ENCODE measurements at regions of chr14 and their contacts with region 1.

Region 1: DNA sequence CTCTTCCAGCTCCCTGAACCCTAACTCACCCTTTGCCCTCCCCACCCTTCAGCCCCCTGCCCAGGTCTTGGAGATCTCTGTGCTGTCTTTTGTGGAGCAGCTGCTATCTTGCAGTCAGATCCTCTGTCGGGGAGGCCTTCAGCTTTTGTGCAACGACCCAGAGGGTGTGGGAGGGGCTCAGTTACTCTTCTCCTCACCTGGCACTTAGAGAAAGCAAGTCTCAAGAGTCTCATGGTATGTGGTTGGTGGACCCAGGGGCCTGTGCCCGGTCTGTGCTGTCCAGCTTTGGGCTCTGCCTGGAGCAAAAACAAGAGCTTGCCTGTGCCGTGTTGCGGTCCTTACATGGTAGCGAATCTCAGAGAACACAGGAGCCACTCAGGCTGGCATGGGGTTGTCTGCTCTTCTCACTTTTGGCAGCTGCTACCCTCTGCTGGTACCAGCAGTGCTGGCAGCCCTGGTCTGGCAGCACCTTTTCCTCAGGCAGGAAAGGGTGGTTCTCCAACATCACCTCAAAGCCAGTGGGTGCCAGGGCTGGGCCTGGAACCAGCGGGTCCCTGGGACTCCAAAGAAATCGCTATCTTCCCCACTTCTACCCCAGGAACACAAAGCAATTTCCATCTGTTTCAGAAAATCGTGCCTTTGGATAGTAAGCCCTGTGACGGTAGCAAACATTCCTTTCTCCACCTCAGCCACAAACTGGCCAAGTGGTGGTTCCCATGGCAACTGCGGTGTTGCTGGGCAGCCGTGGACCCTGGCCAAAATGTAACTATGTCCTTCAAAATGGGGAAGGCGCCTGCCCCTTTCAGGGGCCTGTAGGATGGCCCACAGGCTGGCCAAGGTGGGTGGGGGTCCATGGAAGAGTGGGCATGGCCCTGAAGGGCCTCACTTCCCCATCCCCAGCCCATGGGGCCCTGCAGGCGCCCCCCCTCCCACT is 90.0 kb downstream of the RIN3 start:
- DNase-seq: peak in 8 of 9 donors; percentile 33 to 85 (median 78)
- ATAC-seq: peak; percentile 95
- H3K4me3 ChIP-seq: no peak overlapping the region
- H3K4me3 Mint-ChIP-seq: peak overlapping the region in 9 of 10 donors; percentile 64 to 85 (median 78)
- H3K27ac ChIP-seq: no peak overlapping the region
- H3K27ac Mint-ChIP-seq: peak overlapping the region in 7 of 9 donors; percentile 48 to 95 (median 81)
- H3K4me1 ChIP-seq: peaks cover 0 to 12% of the 10 kb centered on the region in 2 donors
- H3K4me1 Mint-ChIP-seq: peaks cover 12 to 48% (median 37%) of the 10 kb centered on the region in 7 donors
- H3K27me3 ChIP-seq: no peaks in the 10 kb centered on the region
- H3K27me3 Mint-ChIP-seq: peaks cover 0 to 16% (median 0%) of the 10 kb centered on the region in 5 donors

Region 2: GRCh38 chr14:92093320-92093719 is 510.3 kb before region 1 on chr14:
- CTCF ChIA-PET with region 1: no interaction called
- POLR2A ChIA-PET with region 1: no interaction called
- intact Hi-C with region 1: loop called in 1 of 2 experiments (anchors 1 kb)
- DNase-seq: peak in 2 of 9 donors; percentile 7
- ATAC-seq: no peak
- H3K4me3 ChIP-seq: no peak overlapping the region
- H3K4me3 Mint-ChIP-seq: no peak overlapping the region
- H3K27ac ChIP-seq: no peak overlapping the region
- H3K27ac Mint-ChIP-seq: peak overlapping the region in 1 of 9 donors; percentile 6
- H3K4me1 ChIP-seq: no peaks in the 10 kb centered on the region
- H3K4me1 Mint-ChIP-seq: peaks cover 0 to 3% (median 0%) of the 10 kb centered on the region in 7 donors
- H3K27me3 ChIP-seq: no peaks in the 10 kb centered on the region
- H3K27me3 Mint-ChIP-seq: no peaks in the 10 kb centered on the region

Region 3: DNA sequence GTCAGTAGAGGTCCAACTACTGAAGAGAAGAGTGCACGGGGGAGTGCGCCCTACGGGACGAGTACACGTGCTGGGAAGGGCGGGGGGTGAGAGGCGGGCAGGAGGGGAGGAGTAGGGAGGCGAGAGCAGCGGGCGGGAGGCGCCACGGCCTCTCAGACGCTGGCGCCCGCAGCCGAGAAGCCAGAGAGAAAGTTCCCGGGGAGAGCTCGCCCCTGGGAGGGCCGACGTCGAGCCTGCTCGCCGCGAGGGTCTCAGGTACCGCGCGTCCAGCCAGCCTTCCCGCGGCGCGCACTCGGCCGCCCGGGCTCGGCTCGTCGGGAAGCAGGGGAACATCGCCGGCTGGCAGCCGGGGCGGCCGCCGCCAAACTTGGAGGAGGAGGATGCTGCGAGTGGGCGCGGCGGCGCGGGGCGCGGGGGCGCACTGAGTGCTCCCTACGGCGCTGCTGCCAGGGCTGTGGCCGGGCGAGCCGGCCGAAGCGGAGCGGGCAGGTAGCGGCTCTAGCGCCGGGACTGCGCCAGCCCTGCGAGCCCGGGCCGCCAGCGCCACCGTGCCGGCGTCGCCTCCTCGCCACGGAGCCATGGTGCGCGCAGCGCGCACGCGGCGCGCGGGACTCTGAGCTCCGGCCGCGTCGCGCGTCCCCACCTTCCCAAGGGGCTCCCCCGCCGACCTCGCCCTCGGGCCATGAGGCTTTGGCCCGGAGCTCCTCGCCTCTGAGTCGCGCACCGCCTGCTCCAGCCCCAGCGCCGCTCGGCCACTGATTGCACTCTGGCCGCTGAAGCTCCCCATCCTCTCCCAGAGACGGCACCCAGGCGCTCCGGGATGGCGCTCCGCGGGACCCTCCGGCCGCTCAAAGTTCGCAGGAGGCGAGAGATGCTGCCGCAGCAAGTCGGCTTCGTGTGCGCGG is 280.3 kb before region 1 on chr14 and contains the start of gene SLC24A4:
- CTCF ChIA-PET with region 1: no interaction called
- POLR2A ChIA-PET with region 1: no interaction called
- intact Hi-C with region 1: loop called in 1 of 2 experiments (anchors 1 kb)
- DNase-seq: peak in 3 of 9 donors; percentile 3 to 30 (median 12)
- ATAC-seq: no peak
- H3K4me3 ChIP-seq: no peak within 1 kb of the TSS
- H3K4me3 Mint-ChIP-seq: peak within 1 kb of the TSS; percentile 53 to 82 (median 70)
- H3K27ac ChIP-seq: no peak within 1 kb of the TSS
- H3K27ac Mint-ChIP-seq: no peak within 1 kb of the TSS
- H3K4me1 ChIP-seq: no peaks in the 10 kb centered on the region
- H3K4me1 Mint-ChIP-seq: peaks cover 0 to 7% (median 3%) of the 10 kb centered on the region in 7 donors
- H3K27me3 ChIP-seq: no peaks in the 10 kb centered on the region
- H3K27me3 Mint-ChIP-seq: peaks cover 53 to 83% (median 67%) of the 10 kb centered on the region in 5 donors
- total RNA-seq, gene SLC24A4: 0.10 to 15.3 (median 2.1) TPM in 3 of 5 experiments, not detected in the others

Region 4: DNA sequence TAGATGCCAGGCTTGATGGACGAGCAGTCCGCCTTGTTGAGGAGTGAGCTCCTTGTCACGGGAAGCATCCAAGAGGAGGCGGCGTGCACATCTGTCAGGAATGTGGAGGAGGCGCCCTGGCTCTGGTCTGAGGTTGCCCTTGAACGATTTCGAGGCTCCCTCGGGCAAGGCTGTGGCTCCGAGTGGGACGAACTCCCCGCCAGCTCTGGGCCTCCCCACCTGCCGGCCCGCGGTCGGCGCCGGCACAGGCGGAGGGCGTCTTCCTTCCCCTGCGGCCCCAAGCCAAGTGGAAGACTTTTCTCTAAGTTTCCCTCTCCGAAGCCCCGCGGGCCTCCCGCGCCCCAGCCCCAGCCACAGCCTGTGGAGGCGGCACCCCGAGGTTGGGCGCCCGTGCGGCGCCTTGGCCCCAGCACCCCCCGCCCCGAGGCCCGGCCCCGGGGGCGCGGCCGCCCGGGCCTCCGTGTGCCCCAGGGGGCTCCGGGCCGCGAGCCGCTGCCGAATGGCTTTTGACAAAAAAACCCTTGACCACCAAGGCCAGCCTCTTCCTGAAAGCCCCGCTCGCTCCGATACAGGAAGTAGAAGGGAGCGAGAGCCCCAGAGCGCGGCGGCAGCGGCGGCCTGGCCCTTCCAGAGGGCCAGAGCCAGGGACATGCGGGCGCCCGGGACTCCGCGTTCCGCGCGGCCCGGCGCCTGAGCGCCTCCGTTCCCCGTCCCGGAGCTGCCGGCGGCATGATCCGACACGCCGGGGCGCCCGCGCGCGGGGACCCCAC is 90.2 kb before region 1 on chr14 and contains the start of gene RIN3:
- CTCF ChIA-PET with region 1: no interaction called
- POLR2A ChIA-PET with region 1: no interaction called
- intact Hi-C with region 1: loop called in 1 of 2 experiments (anchors 1 kb)
- DNase-seq: peak in 8 of 9 donors; percentile 17 to 43 (median 38)
- ATAC-seq: peak; percentile 71
- H3K4me3 ChIP-seq: peak within 1 kb of the TSS; percentile 76
- H3K4me3 Mint-ChIP-seq: peak within 1 kb of the TSS; percentile 48 to 86 (median 76)
- H3K27ac ChIP-seq: peak within 1 kb of the TSS; percentile 67
- H3K27ac Mint-ChIP-seq: peak within 1 kb of the TSS in 8 of 9 donors; percentile 14 to 71 (median 56)
- H3K4me1 ChIP-seq: peaks cover 25 to 44% of the 10 kb centered on the region in 2 donors
- H3K4me1 Mint-ChIP-seq: peaks cover 21 to 48% (median 34%) of the 10 kb centered on the region in 7 donors
- H3K27me3 ChIP-seq: no peaks in the 10 kb centered on the region
- H3K27me3 Mint-ChIP-seq: peaks cover 0 to 62% (median 0%) of the 10 kb centered on the region in 5 donors
- total RNA-seq, gene RIN3: 45.4 to 182 (median 132) TPM

Region 5: GRCh38 chr14:92563359-92563758 is 40.2 kb before region 1 on chr14:
- CTCF ChIA-PET with region 1: interaction called, 3 read pairs
- POLR2A ChIA-PET with region 1: no interaction called
- intact Hi-C with region 1: loop called in 1 of 2 experiments (anchors 5 kb)
- DNase-seq: no peak
- ATAC-seq: peak; percentile 66
- H3K4me3 ChIP-seq: no peak overlapping the region
- H3K4me3 Mint-ChIP-seq: peak overlapping the region in 1 of 10 donors; percentile 10
- H3K27ac ChIP-seq: no peak overlapping the region
- H3K27ac Mint-ChIP-seq: peak overlapping the region in 2 of 9 donors; percentile 21 to 68
- H3K4me1 ChIP-seq: peaks cover 5 to 9% of the 10 kb centered on the region in 2 donors
- H3K4me1 Mint-ChIP-seq: peaks cover 15 to 64% (median 38%) of the 10 kb centered on the region in 7 donors
- H3K27me3 ChIP-seq: no peaks in the 10 kb centered on the region
- H3K27me3 Mint-ChIP-seq: no peaks in the 10 kb centered on the region

Region 6: DNA sequence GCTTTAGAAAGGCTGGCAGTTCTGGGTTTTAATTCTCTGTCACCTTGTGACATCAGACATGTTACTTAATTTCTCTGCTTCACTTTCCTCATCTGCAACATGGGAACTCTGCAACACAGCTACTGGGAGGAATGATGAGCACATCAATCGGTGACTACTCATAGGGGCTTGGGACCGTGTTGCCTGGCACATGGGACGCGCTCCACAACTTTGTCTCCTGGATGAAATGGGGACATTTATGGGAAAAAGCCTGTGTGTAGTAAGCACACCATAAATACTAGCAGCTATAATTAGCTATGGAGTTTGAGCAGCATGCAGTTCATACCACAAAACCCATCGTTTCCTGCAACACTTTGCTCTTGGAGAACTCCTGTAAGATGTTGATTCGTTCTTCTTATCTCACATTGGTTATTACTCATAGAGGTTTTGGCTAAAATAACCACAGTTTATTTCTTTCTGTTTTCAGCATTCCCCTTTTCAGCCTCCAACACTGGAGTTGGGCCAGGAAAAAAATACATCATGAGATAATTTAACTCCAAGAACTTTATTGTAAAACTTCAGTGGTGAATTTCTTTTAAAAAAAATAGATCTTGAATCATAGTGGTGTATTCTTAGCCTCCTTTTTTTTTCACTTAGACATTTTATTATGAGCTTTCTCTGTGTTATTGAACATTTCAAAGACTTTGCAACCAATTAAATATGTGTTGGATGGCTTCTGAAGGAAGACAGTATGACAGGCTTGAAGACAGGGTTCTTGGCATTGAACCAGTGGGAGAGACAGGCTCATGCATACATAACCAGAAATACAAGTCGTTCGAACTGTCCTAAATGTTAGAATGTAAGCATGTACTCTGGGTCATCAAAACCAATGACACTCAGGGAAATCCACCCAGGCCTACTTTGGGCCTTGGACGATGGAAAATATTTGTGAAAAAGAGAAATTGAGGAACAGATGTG is 17.3 kb before region 1 on chr14:
- CTCF ChIA-PET with region 1: interaction called, 9 read pairs
- POLR2A ChIA-PET with region 1: interaction called, 6 read pairs
- intact Hi-C with region 1: loop called in 1 of 2 experiments (anchors 1 kb)
- DNase-seq: peak in 8 of 9 donors; percentile 46 to 78 (median 66)
- ATAC-seq: peak; percentile 80
- H3K4me3 ChIP-seq: peak overlapping the region; percentile 33
- H3K4me3 Mint-ChIP-seq: peak overlapping the region; percentile 67 to 87 (median 76)
- H3K27ac ChIP-seq: peak overlapping the region; percentile 70
- H3K27ac Mint-ChIP-seq: peak overlapping the region; percentile 90 to 98 (median 95)
- H3K4me1 ChIP-seq: peaks cover 89 to 90% of the 10 kb centered on the region in 2 donors
- H3K4me1 Mint-ChIP-seq: peaks cover 63 to 100% (median 96%) of the 10 kb centered on the region in 7 donors
- H3K27me3 ChIP-seq: no peaks in the 10 kb centered on the region
- H3K27me3 Mint-ChIP-seq: peaks cover 0 to 18% (median 0%) of the 10 kb centered on the region in 5 donors

Region 7: GRCh38 chr14:92914087-92914656 is 310.6 kb after region 1 on chr14:
- CTCF ChIA-PET with region 1: no interaction called
- POLR2A ChIA-PET with region 1: no interaction called
- intact Hi-C with region 1: no loop called
- DNase-seq: peak in 4 of 9 donors; percentile 18 to 58 (median 24)
- ATAC-seq: no peak
- H3K4me3 ChIP-seq: no peak overlapping the region
- H3K4me3 Mint-ChIP-seq: no peak overlapping the region
- H3K27ac ChIP-seq: no peak overlapping the region
- H3K27ac Mint-ChIP-seq: no peak overlapping the region
- H3K4me1 ChIP-seq: no peaks in the 10 kb centered on the region
- H3K4me1 Mint-ChIP-seq: no peaks in the 10 kb centered on the region
- H3K27me3 ChIP-seq: no peaks in the 10 kb centered on the region
- H3K27me3 Mint-ChIP-seq: peaks cover 0 to 16% (median 10%) of the 10 kb centered on the region in 5 donors